ENCODE measurements at regions of chr15 and their contacts with region 1.

Region 1: DNA sequence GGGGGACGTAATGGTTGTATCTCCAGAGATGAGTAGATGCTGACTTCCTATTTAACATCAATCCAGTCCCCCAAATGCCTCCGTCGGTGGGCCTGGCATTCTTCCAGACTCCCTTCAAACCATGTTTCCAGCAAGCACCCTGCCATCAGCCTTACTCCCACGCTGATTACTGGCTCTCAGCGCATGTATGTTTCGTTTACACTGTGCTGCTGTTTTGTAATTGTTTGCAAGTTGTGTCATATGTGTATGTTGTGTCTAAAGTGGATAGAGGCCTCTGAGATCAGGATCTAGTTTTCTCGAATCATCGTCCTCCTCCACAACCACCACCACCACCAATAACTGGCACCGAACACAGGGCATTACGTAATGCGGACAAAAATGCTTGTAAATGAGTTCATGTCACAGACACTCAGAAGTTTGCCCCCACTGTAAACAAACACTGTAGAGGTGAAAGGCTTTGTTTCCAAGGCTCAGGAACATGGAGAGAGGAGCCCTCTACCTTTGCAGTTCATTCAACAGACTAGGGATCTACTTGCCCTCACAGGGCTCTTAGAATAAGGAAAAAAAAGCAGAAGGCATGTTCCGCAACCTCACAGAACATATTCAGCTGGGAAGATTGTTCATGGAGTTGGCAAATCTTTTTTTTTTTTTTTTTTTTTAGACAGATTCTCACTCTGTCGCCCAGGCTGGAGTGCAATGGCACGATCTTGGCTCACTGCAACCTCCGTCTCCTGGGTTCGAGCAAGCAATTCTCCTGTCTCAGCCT is 46.1 kb upstream of the SEMA4B start:
- DNase-seq: no peak
- ATAC-seq: no peak
- H3K4me3 ChIP-seq: no peak overlapping the region
- H3K27ac ChIP-seq: no peak overlapping the region
- H3K4me1 ChIP-seq: peaks cover 5% of the 10 kb centered on the region
- H3K27me3 ChIP-seq: no peaks in the 10 kb centered on the region
- CTCF ChIP-seq: no peak
- EP300 ChIP-seq: no peak
- POLR2A ChIP-seq: no peak
- RAD21 ChIP-seq: no peak

Region 2: GRCh38 chr15:90131848-90132247 is 23.2 kb before region 1 on chr15:
- CTCF ChIA-PET with region 1: no interaction called
- POLR2A ChIA-PET with region 1: no interaction called
- RAD21 ChIA-PET with region 1: no interaction called
- SMC1A ChIA-PET with region 1: no interaction called
- in situ Hi-C with region 1: no loop called
- intact Hi-C with region 1: no loop called
- DNase-seq: no peak
- ATAC-seq: no peak
- H3K4me3 ChIP-seq: no peak overlapping the region
- H3K27ac ChIP-seq: no peak overlapping the region
- H3K4me1 ChIP-seq: peaks cover 3% of the 10 kb centered on the region; the same call in 1 of the 2 replicates
- H3K27me3 ChIP-seq: no peaks in the 10 kb centered on the region
- CTCF ChIP-seq: no peak
- EP300 ChIP-seq: no peak
- POLR2A ChIP-seq: no peak
- RAD21 ChIP-seq: no peak

Region 3: DNA sequence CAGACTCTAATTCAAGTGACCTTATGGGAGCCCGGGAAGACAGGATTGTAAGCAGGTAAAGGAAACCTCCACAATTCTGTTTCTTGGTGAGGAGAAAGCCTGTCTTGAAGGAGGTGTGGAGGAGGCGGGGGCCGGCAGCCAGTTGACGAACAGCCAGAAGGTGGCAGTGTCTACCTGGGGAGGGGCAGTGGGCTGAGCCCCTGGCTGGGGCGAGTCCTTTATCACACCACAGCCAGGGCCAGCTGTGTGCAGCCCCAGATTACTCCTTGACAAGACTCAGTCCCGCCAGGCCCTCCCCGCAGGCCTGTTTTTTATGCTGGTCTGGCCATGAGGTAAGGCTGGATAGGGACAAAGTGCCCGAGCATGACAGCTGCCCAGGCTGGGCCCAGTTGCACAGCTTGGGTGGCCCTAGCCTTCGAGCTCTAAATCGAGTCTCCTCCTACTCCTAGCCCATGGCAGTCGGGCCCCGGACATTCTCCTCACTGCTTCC is 11.8 kb before region 1 on chr15:
- CTCF ChIA-PET with region 1: interaction called, 10 read pairs
- POLR2A ChIA-PET with region 1: interaction called, 3 read pairs
- RAD21 ChIA-PET with region 1: interaction called, 3 read pairs
- SMC1A ChIA-PET with region 1: interaction called, 6 read pairs
- in situ Hi-C with region 1: no loop called
- intact Hi-C with region 1: no loop called
- DNase-seq: no peak
- ATAC-seq: peak; percentile 97
- H3K4me3 ChIP-seq: no peak overlapping the region
- H3K27ac ChIP-seq: no peak overlapping the region
- H3K4me1 ChIP-seq: peaks cover 5% of the 10 kb centered on the region
- H3K27me3 ChIP-seq: no peaks in the 10 kb centered on the region
- CTCF ChIP-seq: peak; percentile 75 to 83 (median 83)
- EP300 ChIP-seq: no peak
- POLR2A ChIP-seq: no peak
- RAD21 ChIP-seq: peak; percentile 83